Mammary epithelial cell (primary cell): ENCODE measurements at regions of chr18 and their contacts with region 1.

Region 1: DNA sequence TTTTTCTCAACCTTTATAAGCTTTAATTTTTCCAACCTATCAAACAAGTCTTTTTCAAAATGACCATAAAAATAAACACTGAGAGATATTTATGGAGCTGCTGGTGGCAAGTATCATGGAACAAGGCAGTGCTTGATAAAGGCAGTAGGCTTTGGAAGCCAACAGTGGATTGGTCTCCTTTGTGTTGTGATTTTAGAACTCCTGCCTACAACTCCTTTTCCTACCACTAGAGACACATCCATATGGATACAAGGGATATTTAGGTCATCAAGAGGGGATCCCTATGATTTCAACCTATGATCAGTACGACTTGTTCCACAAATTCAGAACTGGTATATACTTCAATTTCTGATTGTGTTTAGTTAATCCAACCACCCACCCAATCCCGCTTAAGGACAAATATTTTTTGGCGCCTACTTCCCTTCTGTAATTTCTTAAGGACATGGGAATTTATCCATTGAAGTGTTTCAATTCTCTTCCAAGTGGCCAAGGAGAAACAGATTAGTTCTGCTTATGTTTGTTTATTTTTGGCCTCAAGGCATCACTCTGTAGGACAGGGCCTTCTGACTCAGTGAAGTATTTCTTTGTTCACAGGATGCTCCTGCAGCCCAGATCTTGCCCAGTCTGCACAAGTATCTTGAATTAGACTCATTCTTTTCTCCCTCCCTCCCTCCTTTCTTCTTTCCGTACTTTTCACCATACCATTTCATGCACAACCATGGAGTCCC is 2119.6 kb upstream of the PIK3C3 start:
- DNase-seq: peak; percentile 29
- H3K4me3 ChIP-seq: no peak overlapping the region
- H3K27ac ChIP-seq: no peak overlapping the region
- H3K4me1 ChIP-seq: peaks cover 6% of the 10 kb centered on the region
- H3K27me3 ChIP-seq: no peaks in the 10 kb centered on the region
- CTCF ChIP-seq: peak in 1 of 2 donors; percentile 18

Region 2: GRCh38 chr18:39741755-39742466 is 93.6 kb before region 1 on chr18:
- CTCF ChIA-PET with region 1: no interaction called
- dilution Hi-C with region 1: loop called (anchors 5 kb)
- in situ Hi-C with region 1: no loop called
- intact Hi-C with region 1: no loop called
- DNase-seq: no peak
- H3K4me3 ChIP-seq: no peak overlapping the region
- H3K27ac ChIP-seq: no peak overlapping the region
- H3K4me1 ChIP-seq: no peaks in the 10 kb centered on the region
- H3K27me3 ChIP-seq: no peaks in the 10 kb centered on the region
- CTCF ChIP-seq: no peak

Region 3: DNA sequence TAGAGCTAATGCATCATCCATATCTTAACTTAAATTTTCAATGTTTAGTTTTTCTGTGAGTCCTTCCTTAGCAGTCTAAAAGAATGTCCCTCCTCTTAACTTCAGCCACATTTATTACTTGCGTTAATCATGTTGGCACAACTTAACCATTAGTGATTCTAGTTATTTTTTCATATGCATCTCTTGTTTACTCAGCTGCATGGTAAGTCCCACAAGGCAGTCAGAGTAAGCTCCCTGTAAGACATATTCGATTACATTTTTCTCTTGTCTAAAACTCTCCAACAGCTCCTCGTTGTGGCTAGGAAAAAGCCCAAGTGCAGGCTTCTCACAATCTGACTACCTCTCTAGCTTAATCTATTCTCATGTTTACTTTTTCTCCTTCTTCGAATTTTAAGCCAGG is 74.2 kb after region 1 on chr18:
- CTCF ChIA-PET with region 1: no interaction called
- dilution Hi-C with region 1: no loop called
- in situ Hi-C with region 1: no loop called
- intact Hi-C with region 1: no loop called
- DNase-seq: no peak
- H3K4me3 ChIP-seq: no peak overlapping the region
- H3K27ac ChIP-seq: no peak overlapping the region
- H3K4me1 ChIP-seq: peaks cover 6% of the 10 kb centered on the region
- H3K27me3 ChIP-seq: no peaks in the 10 kb centered on the region
- CTCF ChIP-seq: no peak